ENCODE measurements at regions of chr7 and their contacts with region 1.

Region 1: DNA sequence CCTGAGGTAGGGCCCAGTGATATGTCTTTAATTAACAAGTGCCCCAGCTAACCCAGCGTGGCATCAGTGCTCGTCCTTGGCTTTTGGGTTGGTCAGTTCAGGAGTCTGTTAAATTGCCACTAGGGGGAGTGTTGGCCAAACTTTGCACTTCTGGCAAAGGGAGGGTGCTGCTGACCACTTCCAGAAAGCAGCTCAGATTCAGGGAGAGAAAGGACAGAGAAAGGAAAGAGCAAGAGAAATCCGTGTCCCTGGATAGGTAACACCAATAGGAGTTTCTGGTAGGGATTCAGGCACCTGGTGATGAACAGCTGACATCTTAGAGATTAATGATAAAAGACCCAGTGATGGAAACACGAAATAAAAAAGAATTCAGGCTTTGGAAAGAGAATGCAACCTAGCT is 243.1 kb upstream of the AOAH start:
- DNase-seq: peak; percentile 79
- ATAC-seq: peak; percentile 73
- H3K4me3 ChIP-seq: no peak overlapping the region
- H3K27ac ChIP-seq: no peak overlapping the region
- H3K4me1 ChIP-seq: peaks cover 41% of the 10 kb centered on the region
- H3K27me3 ChIP-seq: no peaks in the 10 kb centered on the region
- CTCF ChIP-seq: peak; percentile 90
- EP300 ChIP-seq: no peak
- POLR2A ChIP-seq: no peak
- RAD21 ChIP-seq: peak; percentile 94

Region 2: GRCh38 chr7:36473454-36474282 is 493.7 kb before region 1 on chr7:
- CTCF ChIA-PET with region 1: no interaction called
- POLR2A ChIA-PET with region 1: no interaction called
- in situ Hi-C with region 1: loop called (anchors 25 kb)
- intact Hi-C with region 1: no loop called
- DNase-seq: peak; percentile 43
- ATAC-seq: peak; percentile 89
- H3K4me3 ChIP-seq: no peak overlapping the region
- H3K27ac ChIP-seq: no peak overlapping the region
- H3K4me1 ChIP-seq: no peaks in the 10 kb centered on the region; the same call in 1 of the 2 replicates
- H3K27me3 ChIP-seq: no peaks in the 10 kb centered on the region
- CTCF ChIP-seq: peak; percentile 80
- EP300 ChIP-seq: no peak
- POLR2A ChIP-seq: no peak
- RAD21 ChIP-seq: peak; percentile 44; the same call in 1 of the 2 replicates

Region 3: GRCh38 chr7:36945612-36946400 is 21.6 kb before region 1 on chr7:
- CTCF ChIA-PET with region 1: no interaction called
- POLR2A ChIA-PET with region 1: no interaction called
- in situ Hi-C with region 1: no loop called
- intact Hi-C with region 1: loop called (anchors 1 kb)
- DNase-seq: peak; percentile 86
- ATAC-seq: peak; percentile 84
- H3K4me3 ChIP-seq: no peak overlapping the region; a peak in 1 of 6 replicates
- H3K27ac ChIP-seq: peak overlapping the region; percentile 62
- H3K4me1 ChIP-seq: peaks cover 93% of the 10 kb centered on the region
- H3K27me3 ChIP-seq: 0 out of 5 replicates have a peak, but pooled peaks cover 0 to 4% of the 10 kb centered on the region in 2 experiments
- CTCF ChIP-seq: peak; percentile 32
- EP300 ChIP-seq: peak; percentile 45 to 97; a peak in 2 of 4 replicates
- POLR2A ChIP-seq: no peak
- RAD21 ChIP-seq: no peak

Region 4: GRCh38 chr7:37016064-37016878 is 48.9 kb after region 1 on chr7:
- CTCF ChIA-PET with region 1: no interaction called
- POLR2A ChIA-PET with region 1: interaction called, 16 read pairs
- in situ Hi-C with region 1: no loop called
- intact Hi-C with region 1: no loop called
- DNase-seq: peak; percentile 77
- ATAC-seq: peak; percentile 97
- H3K4me3 ChIP-seq: peak overlapping the region in 2 of 3 experiments; percentile 13 to 28; a peak in 2 of 6 replicates
- H3K27ac ChIP-seq: peak overlapping the region; percentile 60
- H3K4me1 ChIP-seq: peaks cover 49% of the 10 kb centered on the region
- H3K27me3 ChIP-seq: no peaks in the 10 kb centered on the region
- CTCF ChIP-seq: no peak
- EP300 ChIP-seq: no peak
- POLR2A ChIP-seq: no peak
- RAD21 ChIP-seq: no peak

Region 5: GRCh38 chr7:37100735-37101331 is 133.4 kb after region 1 on chr7:
- CTCF ChIA-PET with region 1: no interaction called
- POLR2A ChIA-PET with region 1: interaction called, 14 read pairs
- in situ Hi-C with region 1: no loop called
- intact Hi-C with region 1: loop called (anchors 2 kb)
- DNase-seq: peak; percentile 80
- ATAC-seq: peak; percentile 71
- H3K4me3 ChIP-seq: 0 out of 6 replicates have a peak overlapping the region, but pooled peaks of 1 of the 3 experiments have one; percentile 6
- H3K27ac ChIP-seq: peak overlapping the region; percentile 10
- H3K4me1 ChIP-seq: peaks cover 35% of the 10 kb centered on the region
- H3K27me3 ChIP-seq: 0 out of 5 replicates have a peak, but pooled peaks cover 0 to 1% of the 10 kb centered on the region in 2 experiments
- CTCF ChIP-seq: no peak
- EP300 ChIP-seq: peak in 1 of 2 experiments; percentile 30; a peak in 1 of 4 replicates
- POLR2A ChIP-seq: no peak
- RAD21 ChIP-seq: no peak

Region 6: DNA sequence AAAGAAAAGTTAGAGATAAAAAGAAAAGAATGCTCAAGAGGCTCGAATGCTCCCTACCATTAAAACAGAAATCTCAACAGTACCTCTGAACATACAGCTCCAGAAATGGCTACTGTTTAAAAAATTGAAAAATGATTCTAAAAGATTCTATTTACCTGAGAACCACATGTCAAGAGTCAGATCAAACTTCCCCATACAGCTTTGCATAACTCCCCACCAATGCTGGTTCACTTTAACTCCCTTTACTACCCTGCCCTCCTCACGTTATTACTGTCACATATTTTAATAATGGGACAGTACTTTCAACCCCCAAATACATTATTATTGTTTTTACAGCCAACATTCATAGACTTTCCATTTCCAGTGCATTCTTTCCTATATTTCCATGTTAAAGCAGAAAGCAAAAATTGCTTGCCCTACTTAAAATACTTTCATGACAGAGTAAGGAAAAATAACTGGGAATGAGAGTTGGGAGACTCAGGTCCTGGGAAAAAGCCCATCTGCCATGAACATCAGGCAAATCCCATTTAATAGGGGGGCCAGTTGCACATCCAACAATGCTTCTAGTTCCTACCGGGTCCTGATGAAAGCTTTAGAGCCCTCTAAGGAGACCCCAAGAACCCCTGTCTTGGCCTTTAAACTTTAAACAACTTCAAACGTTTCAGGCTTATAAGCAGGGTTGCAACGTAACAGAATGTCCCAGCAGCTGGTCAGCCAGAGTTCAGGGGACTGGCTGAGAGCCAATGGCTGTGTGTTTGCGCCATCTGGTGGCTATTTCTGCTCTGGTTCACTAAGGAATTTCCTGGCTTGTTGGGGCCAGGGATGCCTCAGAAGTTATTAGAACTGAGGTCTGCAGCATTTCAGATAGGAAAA is 233.9 kb after region 1 on chr7:
- CTCF ChIA-PET with region 1: interaction called, 18 read pairs
- POLR2A ChIA-PET with region 1: interaction called, 7 read pairs
- in situ Hi-C with region 1: no loop called
- intact Hi-C with region 1: loop called (anchors 1 kb)
- DNase-seq: peak; percentile 64
- ATAC-seq: peak; percentile 83
- H3K4me3 ChIP-seq: no peak overlapping the region
- H3K27ac ChIP-seq: no peak overlapping the region
- H3K4me1 ChIP-seq: peaks cover 45% of the 10 kb centered on the region
- H3K27me3 ChIP-seq: no peaks in the 10 kb centered on the region
- CTCF ChIP-seq: peak; percentile 94
- EP300 ChIP-seq: no peak
- POLR2A ChIP-seq: no peak
- RAD21 ChIP-seq: peak; percentile 86

Measured in HepG2 (cell line).